Caco-2 (cell line): ENCODE measurements at regions of chr1 and their contacts with region 1.

Region 1: GRCh38 chr1:6108937-6109614 is 63.4 kb downstream of the KCNAB2 start:
- DNase-seq: peak in 1 of 2 experiments; percentile 35
- H3K4me3 ChIP-seq: no peak overlapping the region
- H3K4me3 Mint-ChIP-seq: no peak overlapping the region
- H3K27ac Mint-ChIP-seq: no peak overlapping the region
- H3K4me1 ChIP-seq: no peaks in the 10 kb centered on the region
- H3K4me1 Mint-ChIP-seq: no peaks in the 10 kb centered on the region
- H3K27me3 ChIP-seq: no peaks in the 10 kb centered on the region
- H3K27me3 Mint-ChIP-seq: peaks cover 8% of the 10 kb centered on the region
- CTCF ChIP-seq: peak in 1 of 2 experiments; percentile 46

Region 2: GRCh38 chr1:6162773-6163172 is 53.7 kb after region 1 on chr1:
- CTCF ChIA-PET with region 1: no interaction called
- POLR2A ChIA-PET with region 1: no interaction called
- intact Hi-C with region 1: loop called (anchors 10 kb)
- DNase-seq: no peak
- H3K4me3 ChIP-seq: no peak overlapping the region
- H3K4me3 Mint-ChIP-seq: no peak overlapping the region
- H3K27ac Mint-ChIP-seq: no peak overlapping the region
- H3K4me1 ChIP-seq: 0 out of 2 replicates have a peak, but pooled peaks cover 6% of the 10 kb centered on the region
- H3K4me1 Mint-ChIP-seq: peaks cover 7% of the 10 kb centered on the region
- H3K27me3 ChIP-seq: no peaks in the 10 kb centered on the region
- H3K27me3 Mint-ChIP-seq: peaks cover 5% of the 10 kb centered on the region
- CTCF ChIP-seq: no peak